A549 (cell line): ENCODE measurements at regions of chr10 and their contacts with region 1.

Region 1: DNA sequence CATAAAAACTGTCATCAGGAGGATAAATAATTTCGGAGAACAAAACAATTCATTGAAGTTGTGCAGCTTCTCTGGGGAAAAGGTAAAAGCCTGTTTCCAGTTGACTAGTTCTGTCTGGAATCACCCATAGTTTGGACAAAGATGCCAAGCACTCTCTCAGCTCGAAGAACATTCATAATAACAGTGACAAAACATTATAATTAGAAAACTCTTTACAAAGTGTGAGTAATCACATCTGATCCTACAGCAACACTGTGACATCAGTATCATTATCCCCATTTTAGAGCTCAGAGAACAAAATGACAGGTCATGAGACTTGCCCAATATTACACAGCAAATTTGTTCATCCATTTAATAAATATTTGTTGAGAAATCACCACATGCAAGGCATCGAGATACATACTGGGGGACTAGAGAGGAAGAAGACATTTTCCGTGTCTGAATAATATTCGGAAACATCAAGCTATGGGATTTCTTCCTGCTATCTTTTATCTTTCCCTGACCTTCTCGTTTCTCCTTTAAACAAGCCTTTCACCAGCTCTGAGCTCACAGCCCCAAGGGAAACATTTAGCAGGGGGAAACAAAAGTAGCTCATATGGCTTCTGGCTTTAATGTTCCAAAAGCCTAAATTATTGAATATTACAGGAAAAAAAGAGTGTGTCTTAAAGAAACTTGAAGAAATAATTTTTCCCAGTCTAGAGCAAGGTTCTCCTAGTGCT is 123.3 kb upstream of the GHITM start:
- DNase-seq: no peak
- ATAC-seq: no peak
- H3K4me3 ChIP-seq: no peak overlapping the region
- H3K27ac ChIP-seq: no peak overlapping the region
- H3K4me1 ChIP-seq: no peaks in the 10 kb centered on the region
- CTCF ChIP-seq: no peak
- EP300 ChIP-seq: no peak
- POLR2A ChIP-seq: no peak
- RAD21 ChIP-seq: no peak

Region 2: GRCh38 chr10:83917537-83918506 is 98.2 kb before region 1 on chr10:
- CTCF ChIA-PET with region 1: no interaction called
- POLR2A ChIA-PET with region 1: no interaction called
- DNase-seq: peak; percentile 4 to 26
- ATAC-seq: peak; percentile 59 to 80; a peak in 3 of 6 replicates
- H3K4me3 ChIP-seq: no peak overlapping the region
- H3K27ac ChIP-seq: no peak overlapping the region
- H3K4me1 ChIP-seq: no peaks in the 10 kb centered on the region
- CTCF ChIP-seq: no peak
- EP300 ChIP-seq: no peak
- POLR2A ChIP-seq: no peak
- RAD21 ChIP-seq: no peak

Region 3: DNA sequence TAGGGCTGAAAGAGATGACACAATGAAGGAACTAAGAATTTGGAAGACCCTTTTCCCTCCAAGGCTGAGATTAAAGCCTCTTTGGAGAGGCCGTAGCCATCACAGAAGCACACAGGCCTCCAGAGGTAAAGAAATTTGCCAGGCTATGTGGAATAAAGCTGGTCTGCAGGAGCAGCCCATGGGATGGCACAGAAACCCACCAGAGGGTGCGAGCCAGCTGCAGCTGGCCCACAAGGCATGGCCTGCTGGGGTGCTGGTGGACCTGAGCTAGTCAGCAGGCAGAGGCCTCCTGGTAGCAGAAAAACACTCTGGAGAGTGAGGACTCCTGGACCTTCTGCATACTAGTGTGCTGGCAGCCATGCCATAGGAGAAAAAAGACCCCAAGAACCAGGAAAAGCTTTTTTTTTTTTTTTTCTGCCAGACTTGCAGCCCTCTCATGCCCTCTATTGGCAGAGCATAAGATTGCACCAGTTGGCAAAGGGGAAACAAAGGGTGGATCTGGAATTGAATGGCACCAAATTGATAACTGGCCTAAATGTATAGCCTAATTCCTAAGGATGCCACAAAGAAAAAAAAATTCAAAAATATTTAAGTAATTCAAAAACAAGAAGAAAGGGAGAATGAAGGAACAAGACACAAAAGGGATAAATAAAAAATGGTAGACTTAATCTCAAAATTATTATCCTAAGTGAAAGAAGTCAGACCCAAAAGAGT is 10.7 kb after region 1 on chr10:
- CTCF ChIA-PET with region 1: interaction called, 13 read pairs
- POLR2A ChIA-PET with region 1: no interaction called
- DNase-seq: peak in 1 of 2 experiments; percentile 14
- ATAC-seq: 0 out of 6 replicates have a peak, but pooled peaks of 1 of the 2 experiments have one; percentile 37
- H3K4me3 ChIP-seq: no peak overlapping the region
- H3K27ac ChIP-seq: no peak overlapping the region
- H3K4me1 ChIP-seq: no peaks in the 10 kb centered on the region
- CTCF ChIP-seq: peak; percentile 52
- EP300 ChIP-seq: no peak
- POLR2A ChIP-seq: no peak
- RAD21 ChIP-seq: peak; percentile 53 to 58; a peak in 4 of 5 replicates

Region 4: DNA sequence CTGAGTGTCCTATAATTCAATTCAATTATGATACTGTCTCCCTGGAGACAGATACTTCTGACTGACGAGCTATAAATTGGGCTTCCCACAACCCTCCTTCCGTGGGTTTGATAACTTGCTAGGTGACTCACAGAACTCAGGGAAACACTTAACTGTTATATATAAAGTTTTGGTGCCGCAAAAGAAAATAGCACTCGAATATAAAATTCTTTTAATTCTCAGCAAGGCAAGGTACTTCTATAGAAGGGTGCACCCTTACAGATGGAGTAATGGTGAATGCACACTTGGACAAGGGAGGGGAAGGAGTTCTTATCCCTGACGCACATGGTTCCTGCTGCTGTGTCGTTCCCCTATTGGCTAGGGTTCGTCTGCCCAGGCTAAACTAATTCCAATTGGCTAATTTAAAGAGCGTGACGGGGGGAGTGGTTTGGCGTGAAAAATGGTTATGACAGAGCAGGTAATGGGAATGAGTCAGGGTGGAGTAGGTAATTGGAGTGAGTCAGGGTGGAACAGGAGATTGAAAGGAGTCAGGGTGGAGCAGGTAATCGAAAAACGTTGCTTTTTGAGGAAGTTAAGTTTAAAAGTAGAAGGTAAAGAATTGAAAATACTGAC is 102.5 kb after region 1 on chr10:
- CTCF ChIA-PET with region 1: no interaction called
- POLR2A ChIA-PET with region 1: no interaction called
- DNase-seq: peak in 1 of 2 experiments; percentile 65
- ATAC-seq: no peak
- H3K4me3 ChIP-seq: no peak overlapping the region
- H3K27ac ChIP-seq: no peak overlapping the region
- H3K4me1 ChIP-seq: no peaks in the 10 kb centered on the region
- CTCF ChIP-seq: no peak
- EP300 ChIP-seq: no peak
- POLR2A ChIP-seq: no peak
- RAD21 ChIP-seq: no peak